A673 (cell line): ENCODE measurements at regions of chr11 and their contacts with region 1.

Region 1: DNA sequence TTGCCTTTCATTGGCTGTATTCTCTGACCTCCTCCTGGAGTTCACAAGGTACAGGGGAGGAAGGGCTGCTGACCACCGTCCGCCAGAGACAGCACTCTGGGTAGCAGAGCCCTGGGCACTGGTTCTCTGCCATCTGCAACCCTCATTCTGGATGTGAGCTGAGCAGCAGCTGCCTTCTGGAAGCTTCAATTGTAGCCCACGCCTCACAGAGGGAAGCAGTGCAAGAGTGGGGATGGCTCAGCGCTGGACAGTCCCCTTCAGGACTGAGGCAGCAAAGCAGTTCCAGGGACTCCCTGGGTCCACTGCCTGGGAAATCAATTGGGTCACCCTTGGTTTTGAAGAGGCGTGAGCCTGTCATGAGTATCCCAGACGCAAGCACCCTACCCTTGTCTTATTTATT is 346.2 kb downstream of the CADM1 start:
- DNase-seq: no peak
- H3K4me3 ChIP-seq: no peak overlapping the region
- H3K27ac ChIP-seq: no peak overlapping the region
- H3K4me1 ChIP-seq: no peaks in the 10 kb centered on the region
- H3K27me3 ChIP-seq: no peaks in the 10 kb centered on the region
- CTCF ChIP-seq: no peak

Region 2: GRCh38 chr11:115180272-115180671 is 22.2 kb after region 1 on chr11:
- CTCF ChIA-PET with region 1: no interaction called
- POLR2A ChIA-PET with region 1: interaction called, 18 read pairs
- intact Hi-C with region 1: no loop called
- DNase-seq: no peak
- H3K4me3 ChIP-seq: no peak overlapping the region
- H3K27ac ChIP-seq: no peak overlapping the region
- H3K4me1 ChIP-seq: no peaks in the 10 kb centered on the region
- H3K27me3 ChIP-seq: no peaks in the 10 kb centered on the region
- CTCF ChIP-seq: no peak